Right cardiac atrium (tissue), 5 donors: ENCODE measurements at regions of chrX and their contacts with region 1.

Region 1: DNA sequence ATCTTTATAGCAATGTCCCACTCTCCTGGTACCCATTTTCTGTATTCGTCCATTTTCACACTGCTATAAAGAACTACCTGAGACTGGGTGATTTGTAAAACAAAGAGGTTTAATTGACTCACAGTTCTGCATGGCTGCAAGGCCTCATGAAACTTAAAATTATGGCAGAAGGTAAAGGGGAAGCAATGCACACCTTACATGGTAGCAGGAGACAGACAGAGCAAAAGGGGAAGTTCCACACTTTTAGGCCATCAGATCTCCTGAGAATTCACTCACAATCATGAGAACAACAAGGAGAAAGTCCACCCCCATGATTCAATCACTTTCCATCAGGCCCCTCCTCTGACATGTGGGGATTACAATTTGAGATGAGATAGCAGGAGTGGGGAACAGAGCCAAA is 49.7 kb downstream of the TMLHE start:
- DNase-seq: no peak
- ATAC-seq: no peak
- H3K4me3 ChIP-seq: no peak overlapping the region
- H3K27ac ChIP-seq: no peak overlapping the region
- H3K4me1 ChIP-seq: no peaks in the 10 kb centered on the region
- H3K27me3 ChIP-seq: no peaks in the 10 kb centered on the region

Region 2: DNA sequence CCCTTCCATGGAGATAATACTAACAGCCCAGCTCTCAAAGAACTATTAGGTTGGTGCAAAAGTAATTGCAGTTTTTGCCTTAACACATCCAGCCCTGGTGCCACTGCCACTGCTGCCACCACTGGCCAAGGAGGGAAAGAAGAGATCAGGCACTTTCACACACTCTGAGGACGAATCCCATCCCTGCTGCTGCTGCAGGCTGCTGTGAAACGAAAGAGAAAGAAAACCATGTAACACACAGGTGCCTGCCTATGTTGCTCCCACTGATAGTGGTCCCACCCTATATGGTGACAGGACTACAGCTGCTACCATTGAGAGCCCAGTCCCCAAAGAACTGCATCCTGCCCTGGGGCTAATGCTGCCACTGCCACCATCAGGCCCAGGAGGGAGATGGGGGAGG is 14.6 kb after region 1 on chrX:
- intact Hi-C with region 1: loop called in 1 of 4 experiments (anchors 2 kb)
- DNase-seq: no peak
- ATAC-seq: no peak
- H3K4me3 ChIP-seq: no peak overlapping the region
- H3K27ac ChIP-seq: no peak overlapping the region
- H3K4me1 ChIP-seq: no peaks in the 10 kb centered on the region
- H3K27me3 ChIP-seq: no peaks in the 10 kb centered on the region

Region 3: GRCh38 chrX:155778851-155779553 is 215.9 kb after region 1 on chrX:
- intact Hi-C with region 1: no loop called
- DNase-seq: no peak
- ATAC-seq: no peak
- H3K4me3 ChIP-seq: no peak overlapping the region
- H3K27ac ChIP-seq: no peak overlapping the region
- H3K4me1 ChIP-seq: no peaks in the 10 kb centered on the region
- H3K27me3 ChIP-seq: no peaks in the 10 kb centered on the region